Activated B cell treated with CpG ODN at 0.5 μM for 24 hours (primary cell): ENCODE measurements at regions of chr5 and their contacts with region 1.

Region 1: GRCh38 chr5:154445422-154446182 is at the start of gene SAP30L:
- DNase-seq: peak; percentile 97
- ATAC-seq: peak; percentile 96
- H3K4me3 Mint-ChIP-seq: peak within 1 kb of the TSS; percentile 99
- H3K27ac Mint-ChIP-seq: peak within 1 kb of the TSS; percentile 90
- H3K4me1 Mint-ChIP-seq: peaks cover 47% of the 10 kb centered on the region
- H3K27me3 Mint-ChIP-seq: no peaks in the 10 kb centered on the region
- CTCF ChIP-seq: no peak
- total RNA-seq, gene SAP30L: 26.4 and 28.9 TPM in 2 replicates

Region 2: GRCh38 chr5:154038707-154039457 is 406.7 kb before region 1 on chr5 and contains the starts of genes FAM114A2 and MFAP3:
- CTCF ChIA-PET with region 1: no interaction called
- POLR2A ChIA-PET with region 1: interaction called, 6 read pairs
- intact Hi-C with region 1: loop called (anchors 1 kb)
- DNase-seq: peak; percentile 77
- ATAC-seq: peak; percentile 98
- H3K4me3 Mint-ChIP-seq: peak within 1 kb of the TSS; percentile 97
- H3K27ac Mint-ChIP-seq: peak within 1 kb of the TSS; percentile 96
- H3K4me1 Mint-ChIP-seq: peaks cover 45% of the 10 kb centered on the region
- H3K27me3 Mint-ChIP-seq: no peaks in the 10 kb centered on the region
- CTCF ChIP-seq: no peak
- total RNA-seq, gene FAM114A2: 27.4 and 30.5 TPM in 2 replicates
- total RNA-seq, gene MFAP3: 18.4 and 20.8 TPM in 2 replicates

Region 3: GRCh38 chr5:154384480-154385235 is 60.9 kb before region 1 on chr5:
- CTCF ChIA-PET with region 1: no interaction called
- POLR2A ChIA-PET with region 1: no interaction called
- intact Hi-C with region 1: loop called (anchors 1 kb)
- DNase-seq: peak; percentile 28
- ATAC-seq: peak; percentile 87
- H3K4me3 Mint-ChIP-seq: peak overlapping the region; percentile 79
- H3K27ac Mint-ChIP-seq: peak overlapping the region; percentile 85
- H3K4me1 Mint-ChIP-seq: peaks cover 33% of the 10 kb centered on the region
- H3K27me3 Mint-ChIP-seq: no peaks in the 10 kb centered on the region
- CTCF ChIP-seq: no peak

Region 4: GRCh38 chr5:154430961-154431630 is 14.5 kb before region 1 on chr5:
- CTCF ChIA-PET with region 1: no interaction called
- POLR2A ChIA-PET with region 1: no interaction called
- intact Hi-C with region 1: loop called (anchors 1 kb)
- DNase-seq: no peak
- ATAC-seq: no peak
- H3K4me3 Mint-ChIP-seq: no peak overlapping the region
- H3K27ac Mint-ChIP-seq: no peak overlapping the region
- H3K4me1 Mint-ChIP-seq: no peaks in the 10 kb centered on the region
- H3K27me3 Mint-ChIP-seq: no peaks in the 10 kb centered on the region
- CTCF ChIP-seq: no peak

Region 5: GRCh38 chr5:154498591-154498990 is 53.0 kb after region 1 on chr5:
- CTCF ChIA-PET with region 1: no interaction called
- POLR2A ChIA-PET with region 1: no interaction called
- intact Hi-C with region 1: no loop called
- DNase-seq: no peak
- ATAC-seq: no peak
- H3K4me3 Mint-ChIP-seq: no peak overlapping the region
- H3K27ac Mint-ChIP-seq: no peak overlapping the region
- H3K4me1 Mint-ChIP-seq: peaks cover 5% of the 10 kb centered on the region
- H3K27me3 Mint-ChIP-seq: peaks cover 26% of the 10 kb centered on the region
- CTCF ChIP-seq: no peak

Region 6: DNA sequence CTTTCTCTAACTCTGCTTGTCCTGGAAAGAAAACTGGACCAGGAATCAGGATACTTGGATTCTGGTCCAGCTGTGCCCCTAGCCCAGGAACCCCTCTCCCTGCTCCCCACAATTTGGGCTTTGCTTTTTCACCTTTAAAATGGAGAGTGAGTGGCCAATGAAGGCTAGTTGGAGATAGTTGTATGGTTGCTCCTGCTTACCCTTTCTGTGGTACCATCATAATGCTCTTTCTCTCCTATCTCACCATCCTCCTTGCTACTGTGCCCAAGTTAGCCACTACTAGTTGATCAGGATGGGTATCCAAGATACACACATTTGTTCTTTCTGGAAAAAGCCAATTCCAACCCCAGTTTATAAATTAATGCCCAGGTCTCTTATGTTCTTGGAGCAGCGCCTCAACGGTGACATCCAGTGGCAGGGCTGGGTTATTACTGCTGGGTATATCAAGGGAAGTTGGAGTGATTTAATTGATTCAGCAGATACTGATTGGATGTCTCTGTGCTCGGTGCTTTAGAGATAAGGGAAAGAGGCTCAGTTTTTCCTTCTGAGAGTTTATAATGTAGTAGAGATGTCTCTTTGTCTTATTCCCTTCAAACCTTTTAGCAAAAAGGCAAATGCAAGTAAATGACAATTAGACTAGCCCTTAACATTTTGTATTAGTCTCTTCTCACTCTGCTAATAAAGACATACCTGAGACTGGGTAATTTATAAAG is 366.2 kb after region 1 on chr5:
- CTCF ChIA-PET with region 1: no interaction called
- POLR2A ChIA-PET with region 1: no interaction called
- intact Hi-C with region 1: loop called (anchors 10 kb)
- DNase-seq: peak; percentile 32
- ATAC-seq: peak; percentile 88
- H3K4me3 Mint-ChIP-seq: no peak overlapping the region
- H3K27ac Mint-ChIP-seq: no peak overlapping the region
- H3K4me1 Mint-ChIP-seq: peaks cover 26% of the 10 kb centered on the region
- H3K27me3 Mint-ChIP-seq: no peaks in the 10 kb centered on the region
- CTCF ChIP-seq: peak; percentile 95

Region 7: DNA sequence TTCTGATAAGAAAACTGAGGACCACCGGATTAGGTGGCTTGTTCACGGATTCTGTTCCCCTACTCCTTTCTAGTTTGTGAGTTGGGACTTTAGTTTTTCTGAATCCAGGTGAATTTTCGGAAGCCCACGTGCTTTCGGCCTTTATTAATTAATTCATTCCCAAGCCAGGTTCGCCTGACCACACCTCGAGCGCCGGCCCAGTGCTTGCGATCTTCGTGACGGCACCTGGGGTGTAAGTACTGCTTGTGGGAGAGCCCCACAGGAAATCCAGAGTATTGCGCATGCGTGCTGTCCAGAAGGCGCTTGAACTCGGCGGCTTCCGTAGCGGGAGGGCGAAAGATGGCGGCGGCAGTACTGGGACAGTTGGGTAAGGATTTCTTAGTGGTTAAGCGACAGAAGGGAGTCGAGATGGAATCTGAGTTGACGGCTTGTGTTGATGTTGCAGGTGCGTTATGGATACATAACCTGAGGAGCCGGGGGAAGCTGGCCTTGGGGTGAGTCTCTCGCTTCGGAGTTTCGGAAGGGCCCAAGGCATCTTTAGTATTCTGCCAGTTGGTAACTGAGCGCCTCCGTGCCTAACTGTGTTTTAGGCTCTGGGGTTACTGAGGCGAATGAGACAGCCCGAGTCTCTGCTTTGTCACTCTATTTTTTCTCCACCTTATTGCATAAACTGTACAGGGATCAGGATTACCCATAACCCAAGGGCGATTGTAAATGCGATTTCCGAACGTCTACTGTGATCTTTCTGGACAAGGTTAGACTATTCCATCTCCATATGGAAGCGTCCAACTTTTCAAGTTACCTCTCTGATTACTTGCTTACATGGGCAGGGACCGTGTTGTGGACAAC is 495.4 kb after region 1 on chr5 and contains the start of gene MRPL22:
- CTCF ChIA-PET with region 1: no interaction called
- POLR2A ChIA-PET with region 1: no interaction called
- intact Hi-C with region 1: loop called (anchors 2 kb)
- DNase-seq: peak; percentile 88
- ATAC-seq: peak; percentile 63
- H3K4me3 Mint-ChIP-seq: peak within 1 kb of the TSS; percentile 99
- H3K27ac Mint-ChIP-seq: peak within 1 kb of the TSS; percentile 97
- H3K4me1 Mint-ChIP-seq: peaks cover 49% of the 10 kb centered on the region
- H3K27me3 Mint-ChIP-seq: no peaks in the 10 kb centered on the region
- CTCF ChIP-seq: no peak
- total RNA-seq, gene MRPL22: 41.9 and 42.6 TPM in 2 replicates